Esophagus muscularis mucosa (tissue), 4 donors: ENCODE measurements at regions of chr1 and their contacts with region 1.

Region 1: GRCh38 chr1:16124377-16125087 is 31.3 kb downstream of the EPHA2 start:
- DNase-seq: no peak
- H3K4me3 ChIP-seq: no peak overlapping the region
- H3K27ac ChIP-seq: no peak overlapping the region
- H3K4me1 ChIP-seq: peaks cover 6 to 14% (median 9%) of the 10 kb centered on the region in 4 donors
- H3K27me3 ChIP-seq: no peaks in the 10 kb centered on the region
- CTCF ChIP-seq: no peak
- EP300 ChIP-seq: no peak
- POLR2A ChIP-seq: no peak

Region 2: DNA sequence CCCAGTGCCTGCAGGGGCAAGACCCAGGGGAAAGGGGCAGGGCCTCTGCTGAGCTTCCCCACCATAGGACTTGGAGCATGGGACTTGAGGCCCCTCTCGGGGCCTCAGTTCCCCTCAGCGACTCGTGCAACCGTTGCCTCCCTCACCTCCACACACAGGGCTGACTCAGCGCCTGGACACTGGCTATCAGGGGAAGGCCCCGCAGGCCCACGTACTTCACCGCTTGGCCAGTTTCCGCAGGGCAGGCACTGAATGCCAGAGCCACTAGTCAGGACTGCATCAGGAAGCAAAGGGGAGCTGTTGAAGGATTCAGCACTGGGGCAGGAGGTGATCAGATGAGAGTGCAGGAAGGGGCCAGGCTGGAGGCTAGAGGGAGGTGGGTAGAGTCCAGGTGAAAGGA is 35.5 kb before region 1 on chr1:
- intact Hi-C with region 1: loop called (anchors 5 kb)
- DNase-seq: no peak
- H3K4me3 ChIP-seq: no peak overlapping the region
- H3K27ac ChIP-seq: no peak overlapping the region
- H3K4me1 ChIP-seq: peaks cover 0 to 17% (median 3%) of the 10 kb centered on the region in 4 donors
- H3K27me3 ChIP-seq: no peaks in the 10 kb centered on the region
- CTCF ChIP-seq: no peak
- EP300 ChIP-seq: no peak
- POLR2A ChIP-seq: no peak